Activated CD8-positive, alpha-beta memory T cell treated with anti-CD3 and anti-CD28 coated beads, Interleukin-2, amount 10 ng/mL, durations not matched to agents 7 days and 5 days (primary cell): ENCODE measurements at regions of chr6 and their contacts with region 1.

Region 1: GRCh38 chr6:31739639-31740396 is at the start of gene MSH5:
- DNase-seq: peak; percentile 99
- ATAC-seq: peak; percentile 81
- H3K4me3 Mint-ChIP-seq: peak within 1 kb of the TSS; percentile 91
- H3K27ac Mint-ChIP-seq: peak within 1 kb of the TSS; percentile 96
- H3K4me1 Mint-ChIP-seq: peaks cover 45% of the 10 kb centered on the region
- H3K27me3 Mint-ChIP-seq: no peaks in the 10 kb centered on the region
- total RNA-seq, gene MSH5: 75.6 to 109 TPM

Region 2: DNA sequence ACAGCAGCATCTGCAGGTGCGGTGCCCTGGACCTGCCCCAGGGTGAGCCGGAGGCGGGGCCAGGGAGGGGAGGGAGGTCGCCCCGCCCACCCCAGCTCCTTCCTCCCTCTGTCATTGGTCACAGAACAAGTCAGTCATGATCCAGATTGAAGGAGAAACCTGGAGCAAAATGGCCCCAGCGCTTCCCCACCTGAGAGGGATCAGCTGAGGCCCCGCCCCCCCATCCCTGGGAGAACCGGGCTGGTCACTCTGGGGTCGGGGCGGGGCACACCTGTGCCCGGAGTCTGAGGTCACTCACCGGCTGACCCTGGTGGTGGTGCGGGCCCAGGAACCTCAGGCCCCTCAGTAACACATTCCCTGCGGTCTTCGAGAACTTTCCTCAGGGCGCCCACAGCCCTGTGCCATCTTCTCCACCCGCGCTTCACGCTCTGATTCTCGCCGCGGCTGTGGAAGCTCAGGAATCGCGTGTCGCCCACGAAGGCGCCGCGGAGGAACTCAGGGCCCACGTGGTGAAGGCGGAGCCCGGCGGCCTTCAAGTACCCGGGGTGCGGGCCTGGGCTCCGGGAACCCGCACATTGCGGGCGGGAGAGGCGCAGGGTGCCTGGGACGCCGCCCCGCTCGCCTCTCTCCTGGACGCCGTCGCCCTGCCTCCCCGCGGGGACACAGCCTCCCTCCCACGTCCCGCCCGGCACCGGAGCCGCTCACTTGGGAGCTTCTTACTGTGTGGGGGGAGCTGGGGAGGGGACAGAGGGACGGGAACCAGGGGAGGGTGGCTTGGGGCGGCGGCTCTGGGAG is 431.6 kb before region 1 on chr6:
- CTCF ChIA-PET with region 1: no interaction called
- DNase-seq: peak; percentile 60
- ATAC-seq: peak; percentile 78
- H3K4me3 Mint-ChIP-seq: no peak overlapping the region
- H3K27ac Mint-ChIP-seq: no peak overlapping the region
- H3K4me1 Mint-ChIP-seq: peaks cover 7% of the 10 kb centered on the region
- H3K27me3 Mint-ChIP-seq: peaks cover 54% of the 10 kb centered on the region

Region 3: GRCh38 chr6:31490115-31490873 is 249.5 kb before region 1 on chr6:
- CTCF ChIA-PET with region 1: no interaction called
- DNase-seq: no peak
- ATAC-seq: no peak
- H3K4me3 Mint-ChIP-seq: no peak overlapping the region
- H3K27ac Mint-ChIP-seq: no peak overlapping the region
- H3K4me1 Mint-ChIP-seq: peaks cover 36% of the 10 kb centered on the region
- H3K27me3 Mint-ChIP-seq: no peaks in the 10 kb centered on the region

Region 4: GRCh38 chr6:31534521-31535040 is 205.2 kb before region 1 on chr6:
- CTCF ChIA-PET with region 1: no interaction called
- DNase-seq: no peak
- ATAC-seq: no peak
- H3K4me3 Mint-ChIP-seq: no peak overlapping the region
- H3K27ac Mint-ChIP-seq: no peak overlapping the region
- H3K4me1 Mint-ChIP-seq: peaks cover 51% of the 10 kb centered on the region
- H3K27me3 Mint-ChIP-seq: no peaks in the 10 kb centered on the region

Region 5: DNA sequence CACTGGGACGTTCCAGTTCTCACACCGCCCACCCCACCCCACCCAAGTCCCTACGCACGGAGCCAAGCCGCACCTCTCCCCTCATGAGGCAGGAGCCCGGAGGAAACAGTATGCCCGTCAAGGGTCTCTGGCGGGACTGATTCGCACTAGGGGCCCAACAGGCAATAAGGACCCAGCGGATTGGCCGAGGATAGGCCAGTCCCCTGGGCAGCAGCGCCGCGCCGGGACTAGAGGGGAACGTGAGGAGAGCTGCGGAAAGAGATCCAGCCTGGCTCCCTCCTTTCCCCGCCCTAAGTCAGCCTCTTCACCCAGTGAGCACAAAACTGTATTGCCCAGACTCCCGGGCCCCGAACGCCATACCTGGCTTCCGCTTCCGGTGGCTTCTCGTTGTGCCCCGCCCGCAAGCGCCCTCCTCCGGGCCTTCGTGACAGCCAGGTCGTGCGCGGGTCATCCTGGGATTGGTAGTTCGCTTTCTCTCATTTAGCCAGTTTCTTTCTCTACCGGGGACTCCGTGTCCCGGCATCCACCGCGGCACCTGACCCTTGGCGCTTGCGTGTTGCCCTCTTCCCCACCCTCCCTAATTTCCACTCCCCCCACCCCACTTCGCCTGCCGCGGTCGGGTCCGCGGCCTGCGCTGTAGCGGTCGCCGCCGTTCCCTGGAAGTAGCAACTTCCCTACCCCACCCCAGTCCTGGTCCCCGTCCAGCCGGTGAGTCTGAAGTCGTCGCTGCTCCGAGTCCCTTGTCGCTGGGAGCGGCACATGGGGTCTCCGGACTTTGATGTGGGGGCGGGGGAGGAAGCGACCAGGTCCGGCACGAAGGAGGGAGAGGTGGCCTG is 74.1 kb before region 1 on chr6 and contains the start of gene CSNK2B:
- CTCF ChIA-PET with region 1: interaction called, 11 read pairs
- DNase-seq: peak; percentile 99
- ATAC-seq: peak; percentile 87
- H3K4me3 Mint-ChIP-seq: peak within 1 kb of the TSS; percentile 90
- H3K27ac Mint-ChIP-seq: peak within 1 kb of the TSS; percentile 95
- H3K4me1 Mint-ChIP-seq: peaks cover 60% of the 10 kb centered on the region
- H3K27me3 Mint-ChIP-seq: no peaks in the 10 kb centered on the region
- total RNA-seq, gene CSNK2B: 206 to 236 TPM

Region 6: DNA sequence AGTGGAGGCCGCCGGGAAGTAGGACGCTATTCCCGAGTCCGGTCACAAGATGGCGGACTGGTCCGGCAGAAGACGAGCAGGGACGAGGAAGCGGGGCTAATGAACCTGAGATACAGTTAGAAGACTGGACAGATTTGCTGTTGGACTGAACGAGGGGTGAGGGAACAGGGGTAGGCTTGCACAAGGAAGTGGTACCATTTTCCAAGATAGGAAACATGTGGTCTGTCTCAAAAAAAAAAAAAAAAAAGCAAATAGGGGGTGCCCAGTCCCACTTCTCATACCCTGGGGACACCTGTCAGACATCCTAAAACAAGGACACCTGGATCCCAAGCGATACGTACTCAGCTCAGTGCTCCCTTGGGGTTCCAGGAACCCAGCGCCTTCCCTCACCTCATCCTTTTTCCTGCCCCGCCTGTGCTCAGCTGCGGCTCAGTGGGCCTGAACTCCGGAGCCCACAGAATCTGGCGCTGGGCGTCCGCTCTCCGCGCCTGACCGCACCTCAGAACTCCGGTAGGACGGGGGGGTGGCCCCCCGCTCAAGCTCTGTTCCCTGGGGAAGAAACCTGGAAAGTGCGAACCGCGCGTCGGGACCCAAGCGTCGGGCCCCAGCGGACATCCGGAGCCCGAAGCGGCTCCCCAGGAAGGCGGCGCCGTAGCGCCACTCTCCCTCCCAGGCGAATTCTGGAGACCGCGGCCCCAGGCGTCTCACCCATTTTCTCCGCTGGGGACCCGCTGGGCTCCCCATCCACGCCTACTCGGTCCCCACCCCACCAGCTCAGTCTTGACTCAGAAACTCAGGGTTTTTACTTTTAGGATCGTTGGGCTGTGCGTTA is 58.8 kb before region 1 on chr6 and contains the start of gene LY6G5C:
- CTCF ChIA-PET with region 1: interaction called, 28 read pairs
- DNase-seq: peak; percentile 80
- ATAC-seq: peak; percentile 78
- H3K4me3 Mint-ChIP-seq: peak within 1 kb of the TSS; percentile 71
- H3K27ac Mint-ChIP-seq: peak within 1 kb of the TSS; percentile 78
- H3K4me1 Mint-ChIP-seq: peaks cover 34% of the 10 kb centered on the region
- H3K27me3 Mint-ChIP-seq: no peaks in the 10 kb centered on the region
- total RNA-seq, gene LY6G5C: 2.6 to 3.8 TPM

Region 7: GRCh38 chr6:31702819-31703522 is 36.8 kb before region 1 on chr6 and contains the start of gene ABHD16A:
- CTCF ChIA-PET with region 1: interaction called, 15 read pairs
- DNase-seq: peak; percentile 99
- ATAC-seq: peak; percentile 96
- H3K4me3 Mint-ChIP-seq: peak within 1 kb of the TSS; percentile 100
- H3K27ac Mint-ChIP-seq: peak within 1 kb of the TSS; percentile 98
- H3K4me1 Mint-ChIP-seq: peaks cover 32% of the 10 kb centered on the region
- H3K27me3 Mint-ChIP-seq: no peaks in the 10 kb centered on the region
- total RNA-seq, gene ABHD16A: 49.0 to 56.7 TPM

Region 8: GRCh38 chr6:31729515-31729978 is 10.3 kb before region 1 on chr6:
- CTCF ChIA-PET with region 1: interaction called, 60 read pairs
- DNase-seq: peak; percentile 87
- ATAC-seq: peak; percentile 72
- H3K4me3 Mint-ChIP-seq: peak overlapping the region; percentile 86
- H3K27ac Mint-ChIP-seq: peak overlapping the region; percentile 80
- H3K4me1 Mint-ChIP-seq: peaks cover 65% of the 10 kb centered on the region
- H3K27me3 Mint-ChIP-seq: no peaks in the 10 kb centered on the region

Region 9: GRCh38 chr6:31769684-31770371 is 30.0 kb after region 1 on chr6:
- CTCF ChIA-PET with region 1: interaction called, 40 read pairs
- DNase-seq: peak; percentile 92
- ATAC-seq: peak; percentile 91
- H3K4me3 Mint-ChIP-seq: no peak overlapping the region
- H3K27ac Mint-ChIP-seq: peak overlapping the region; percentile 16
- H3K4me1 Mint-ChIP-seq: peaks cover 31% of the 10 kb centered on the region
- H3K27me3 Mint-ChIP-seq: no peaks in the 10 kb centered on the region

Region 10: GRCh38 chr6:31795616-31796298 is 55.9 kb after region 1 on chr6 and contains the start of gene VARS1:
- CTCF ChIA-PET with region 1: interaction called, 23 read pairs
- DNase-seq: peak; percentile 90
- ATAC-seq: peak; percentile 87
- H3K4me3 Mint-ChIP-seq: peak within 1 kb of the TSS; percentile 96
- H3K27ac Mint-ChIP-seq: peak within 1 kb of the TSS; percentile 98
- H3K4me1 Mint-ChIP-seq: peaks cover 48% of the 10 kb centered on the region
- H3K27me3 Mint-ChIP-seq: no peaks in the 10 kb centered on the region
- total RNA-seq, gene VARS1: 107 to 140 TPM

Region 11: GRCh38 chr6:31870385-31870921 is 130.6 kb after region 1 on chr6:
- CTCF ChIA-PET with region 1: no interaction called
- DNase-seq: no peak
- ATAC-seq: no peak
- H3K4me3 Mint-ChIP-seq: no peak overlapping the region
- H3K27ac Mint-ChIP-seq: no peak overlapping the region
- H3K4me1 Mint-ChIP-seq: peaks cover 4% of the 10 kb centered on the region
- H3K27me3 Mint-ChIP-seq: no peaks in the 10 kb centered on the region